Lower leg skin (tissue), 4 donors: ENCODE measurements at regions of chr2 and their contacts with region 1.

Region 1: DNA sequence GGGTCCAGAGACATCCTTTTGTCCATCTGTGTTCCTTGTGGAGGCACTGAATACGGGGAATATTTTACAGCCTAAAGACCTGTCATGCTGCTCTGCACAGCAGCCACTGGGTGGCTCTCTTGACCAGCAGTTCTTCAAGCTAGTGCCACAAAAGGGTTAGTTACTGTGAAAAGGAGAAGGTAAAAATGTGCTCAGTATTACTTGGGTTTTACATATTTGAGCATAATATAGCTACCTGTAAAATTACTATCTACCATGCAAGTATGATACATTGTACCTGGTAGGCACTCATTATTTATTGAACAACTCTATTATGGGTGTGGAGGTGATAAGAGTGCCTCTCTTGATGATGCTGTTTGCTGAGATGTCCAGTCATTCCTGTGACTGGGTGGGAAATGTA is 23.6 kb downstream of the FZD5 start:
- DNase-seq: no peak
- H3K4me3 ChIP-seq: no peak overlapping the region
- CTCF ChIP-seq: peak in 1 of 3 donors; percentile 60
- POLR2A ChIP-seq: no peak

Region 2: GRCh38 chr2:207619764-207620203 is 126.3 kb before region 1 on chr2:
- intact Hi-C with region 1: no loop called
- DNase-seq: no peak
- H3K4me3 ChIP-seq: no peak overlapping the region
- CTCF ChIP-seq: no peak
- POLR2A ChIP-seq: no peak

Region 3: DNA sequence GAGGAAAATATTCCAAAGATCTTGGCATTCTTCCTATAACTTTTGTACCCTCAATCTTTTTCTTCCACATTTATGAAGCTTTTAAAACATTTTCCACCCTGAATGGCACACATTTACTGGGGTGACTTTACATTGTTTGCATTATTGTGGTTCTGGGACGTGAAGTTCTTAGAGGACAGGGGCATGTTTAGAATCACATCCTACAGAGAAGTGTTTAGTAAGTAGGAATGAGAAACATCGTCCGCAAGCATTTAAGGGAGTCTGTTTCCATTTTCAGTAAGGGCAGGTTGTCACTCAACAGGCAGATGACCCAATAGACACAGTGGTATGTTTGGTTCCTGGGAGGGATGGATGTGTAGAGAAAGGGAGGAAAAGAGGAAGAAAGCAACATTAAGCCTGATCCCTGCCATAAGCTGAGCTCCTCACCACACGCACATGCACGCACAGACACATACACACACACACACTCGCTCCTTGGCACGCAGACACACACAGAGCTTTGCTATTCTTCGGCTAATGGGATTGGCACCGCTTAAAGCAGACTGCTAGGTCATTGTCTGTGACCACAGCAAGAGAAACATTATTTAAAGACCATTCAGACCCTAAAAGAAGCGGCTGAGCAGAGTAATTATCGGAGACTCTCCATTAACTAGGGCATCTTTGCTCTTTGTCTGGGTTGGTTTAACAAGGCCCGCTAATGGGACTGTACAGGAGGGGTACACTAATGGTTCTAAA is 293.4 kb after region 1 on chr2:
- intact Hi-C with region 1: loop called (anchors 5 kb)
- DNase-seq: no peak
- H3K4me3 ChIP-seq: no peak overlapping the region
- CTCF ChIP-seq: no peak
- POLR2A ChIP-seq: no peak